B cell (primary cell): ENCODE measurements at regions of chr10 and their contacts with region 1.

Region 1: GRCh38 chr10:119494236-119495060 is 48.1 kb downstream of the RGS10 start:
- DNase-seq: no peak
- ATAC-seq: no peak
- H3K4me3 ChIP-seq: no peak overlapping the region
- H3K4me3 Mint-ChIP-seq: no peak overlapping the region
- H3K27ac ChIP-seq: no peak overlapping the region
- H3K27ac Mint-ChIP-seq: peak overlapping the region; percentile 53
- H3K4me1 ChIP-seq: peaks cover 3 to 8% of the 10 kb centered on the region in 2 donors
- H3K4me1 Mint-ChIP-seq: peaks cover 13% of the 10 kb centered on the region
- H3K27me3 ChIP-seq: no peaks in the 10 kb centered on the region
- H3K27me3 Mint-ChIP-seq: no peaks in the 10 kb centered on the region
- CTCF ChIP-seq: no peak

Region 2: DNA sequence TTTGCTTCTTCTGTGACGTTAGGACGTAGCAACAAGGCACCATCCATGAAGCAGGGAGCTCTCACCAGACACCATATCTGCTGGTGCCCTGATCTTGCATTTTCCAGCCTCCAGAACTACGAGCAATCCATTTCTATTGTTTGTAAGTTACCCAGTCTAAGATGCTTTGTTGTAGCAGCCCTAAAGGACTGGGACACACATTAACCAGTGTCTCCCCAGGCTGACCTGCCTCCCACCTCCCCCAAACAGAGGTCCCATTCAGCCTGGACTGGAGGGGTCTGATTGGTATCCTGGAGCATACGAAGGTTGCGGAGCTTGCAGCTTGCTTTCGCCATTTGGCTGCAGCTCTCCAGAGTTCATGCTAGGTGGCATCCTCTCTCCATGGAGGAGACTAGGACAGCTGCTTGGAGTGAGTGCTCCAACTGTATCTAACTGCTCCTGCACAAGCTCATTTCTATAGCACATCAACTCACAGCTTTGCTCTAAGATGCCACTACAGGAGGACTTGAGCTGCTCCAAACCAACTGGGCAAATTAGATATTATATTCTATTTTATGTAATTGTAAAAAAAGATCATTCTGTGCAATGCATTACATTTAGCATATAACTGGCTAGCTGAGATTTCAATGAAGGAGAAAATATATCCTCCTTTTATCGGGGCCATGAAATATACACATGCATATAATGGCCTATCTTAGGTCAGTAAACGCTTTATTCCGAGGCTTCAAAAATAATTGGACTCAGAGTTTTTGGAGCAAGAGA is 295.0 kb before region 1 on chr10:
- CTCF ChIA-PET with region 1: interaction called, 70 read pairs
- POLR2A ChIA-PET with region 1: no interaction called
- intact Hi-C with region 1: loop called (anchors 1 kb)
- DNase-seq: peak; percentile 68
- ATAC-seq: peak; percentile 84
- H3K4me3 ChIP-seq: no peak overlapping the region
- H3K4me3 Mint-ChIP-seq: no peak overlapping the region
- H3K27ac ChIP-seq: no peak overlapping the region
- H3K27ac Mint-ChIP-seq: no peak overlapping the region
- H3K4me1 ChIP-seq: peaks cover 0 to 3% of the 10 kb centered on the region in 2 donors
- H3K4me1 Mint-ChIP-seq: peaks cover 4% of the 10 kb centered on the region
- H3K27me3 ChIP-seq: peaks cover 0 to 8% (median 6%) of the 10 kb centered on the region in 4 experiments
- H3K27me3 Mint-ChIP-seq: peaks cover 9% of the 10 kb centered on the region
- CTCF ChIP-seq: peak; percentile 52

Region 3: DNA sequence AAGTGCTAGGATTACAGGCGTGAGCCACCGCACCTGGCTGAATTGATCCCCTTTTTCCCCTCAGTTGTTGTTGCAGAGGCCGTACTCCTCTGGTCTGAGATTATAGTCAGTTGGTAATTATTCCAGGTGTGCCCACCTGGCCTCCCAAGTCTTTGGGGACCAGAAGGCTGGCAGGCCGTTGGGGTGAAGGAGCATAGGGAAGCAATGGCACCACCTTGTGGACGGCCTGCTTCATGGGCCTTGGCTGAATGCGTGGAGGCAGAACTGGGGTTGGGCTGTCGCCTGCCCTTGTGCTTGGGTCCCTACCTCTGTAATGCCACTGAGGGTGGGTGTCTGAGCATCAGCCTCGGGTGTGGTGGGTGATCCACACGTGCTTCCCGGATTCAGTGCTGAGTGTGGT is 77.6 kb before region 1 on chr10:
- CTCF ChIA-PET with region 1: interaction called, 14 read pairs
- POLR2A ChIA-PET with region 1: no interaction called
- intact Hi-C with region 1: no loop called
- DNase-seq: peak; percentile 83
- ATAC-seq: peak; percentile 90
- H3K4me3 ChIP-seq: no peak overlapping the region
- H3K4me3 Mint-ChIP-seq: no peak overlapping the region
- H3K27ac ChIP-seq: no peak overlapping the region
- H3K27ac Mint-ChIP-seq: peak overlapping the region; percentile 62
- H3K4me1 ChIP-seq: peaks cover 0 to 8% of the 10 kb centered on the region in 2 donors
- H3K4me1 Mint-ChIP-seq: peaks cover 6% of the 10 kb centered on the region
- H3K27me3 ChIP-seq: no peaks in the 10 kb centered on the region
- H3K27me3 Mint-ChIP-seq: no peaks in the 10 kb centered on the region
- CTCF ChIP-seq: peak; percentile 88

Region 4: DNA sequence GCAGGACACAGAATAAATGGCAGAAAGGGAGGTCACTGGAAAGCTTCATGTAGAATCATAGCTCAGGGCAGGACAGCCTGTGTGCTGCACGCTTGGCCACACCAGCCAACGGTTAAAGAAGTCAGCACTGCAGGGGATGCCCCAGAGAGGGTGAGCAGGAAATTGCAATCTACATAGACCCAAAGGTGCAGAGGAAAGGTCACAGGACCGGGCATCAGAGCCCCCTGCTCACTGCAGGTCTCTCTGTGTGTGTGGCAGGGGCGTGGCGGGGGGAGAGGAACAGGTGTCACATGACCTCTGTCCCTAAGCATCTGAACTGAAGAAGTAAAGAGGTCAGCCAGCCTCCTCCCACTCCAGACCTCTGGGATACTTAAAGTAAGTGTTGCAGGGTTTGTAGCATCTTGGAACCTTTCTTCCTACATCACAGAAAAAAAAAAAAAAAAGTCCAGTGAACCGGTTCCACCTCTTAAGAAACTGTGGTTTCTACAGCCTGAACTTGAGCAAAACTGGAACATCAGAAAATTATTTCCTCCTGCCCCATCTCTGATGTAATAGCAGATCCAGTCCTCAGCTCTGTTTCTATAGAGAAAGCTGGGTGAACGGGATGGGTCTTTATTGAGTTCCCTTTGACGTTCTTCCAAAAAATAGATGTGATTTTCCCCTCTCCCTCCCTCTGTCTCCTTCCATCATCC is 16.2 kb before region 1 on chr10:
- CTCF ChIA-PET with region 1: interaction called, 27 read pairs
- POLR2A ChIA-PET with region 1: interaction called, 9 read pairs
- intact Hi-C with region 1: loop called (anchors 1 kb)
- DNase-seq: peak; percentile 77
- ATAC-seq: peak; percentile 95
- H3K4me3 ChIP-seq: peak overlapping the region in 2 of 5 experiments; percentile 5 to 42
- H3K4me3 Mint-ChIP-seq: peak overlapping the region; percentile 87
- H3K27ac ChIP-seq: peak overlapping the region; percentile 47 to 62
- H3K27ac Mint-ChIP-seq: peak overlapping the region; percentile 81
- H3K4me1 ChIP-seq: peaks cover 27 to 31% of the 10 kb centered on the region in 2 donors
- H3K4me1 Mint-ChIP-seq: peaks cover 37% of the 10 kb centered on the region
- H3K27me3 ChIP-seq: no peaks in the 10 kb centered on the region
- H3K27me3 Mint-ChIP-seq: no peaks in the 10 kb centered on the region
- CTCF ChIP-seq: no peak

Region 5: GRCh38 chr10:119517235-119518141 is 23.0 kb after region 1 on chr10:
- CTCF ChIA-PET with region 1: interaction called, 6 read pairs
- POLR2A ChIA-PET with region 1: interaction called, 12 read pairs
- intact Hi-C with region 1: loop called (anchors 2 kb)
- DNase-seq: peak; percentile 89
- ATAC-seq: peak; percentile 73
- H3K4me3 ChIP-seq: peak overlapping the region in 3 of 5 experiments; percentile 25 to 51 (median 33)
- H3K4me3 Mint-ChIP-seq: peak overlapping the region; percentile 64
- H3K27ac ChIP-seq: peak overlapping the region; percentile 67 to 95
- H3K27ac Mint-ChIP-seq: peak overlapping the region; percentile 94
- H3K4me1 ChIP-seq: peaks cover 31 to 38% of the 10 kb centered on the region in 2 donors
- H3K4me1 Mint-ChIP-seq: peaks cover 34% of the 10 kb centered on the region
- H3K27me3 ChIP-seq: no peaks in the 10 kb centered on the region
- H3K27me3 Mint-ChIP-seq: no peaks in the 10 kb centered on the region
- CTCF ChIP-seq: no peak

Region 6: DNA sequence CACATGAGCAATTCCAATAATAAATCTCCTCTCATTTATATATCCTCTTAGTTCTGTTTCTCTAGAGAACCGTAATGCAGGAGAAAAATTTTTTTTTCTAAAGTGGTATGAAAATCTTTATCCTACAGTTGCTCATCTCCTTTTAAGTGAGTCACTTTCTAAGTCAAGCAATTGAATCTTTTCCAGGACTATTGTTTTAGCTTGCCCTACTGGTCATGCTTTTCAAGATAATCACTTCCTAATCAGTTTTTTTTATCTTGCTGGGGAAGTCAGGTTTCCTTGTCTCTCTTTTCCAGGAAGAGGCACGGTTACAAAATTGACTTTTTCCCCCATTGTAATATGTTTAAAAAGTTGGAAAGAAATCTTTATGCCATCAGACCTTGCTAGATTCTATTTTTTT is 275.4 kb after region 1 on chr10:
- CTCF ChIA-PET with region 1: no interaction called
- POLR2A ChIA-PET with region 1: no interaction called
- intact Hi-C with region 1: no loop called
- DNase-seq: no peak
- ATAC-seq: no peak
- H3K4me3 ChIP-seq: no peak overlapping the region
- H3K4me3 Mint-ChIP-seq: no peak overlapping the region
- H3K27ac ChIP-seq: peak overlapping the region in 1 of 2 donors; percentile 14
- H3K27ac Mint-ChIP-seq: no peak overlapping the region
- H3K4me1 ChIP-seq: peaks cover 0 to 6% of the 10 kb centered on the region in 2 donors
- H3K4me1 Mint-ChIP-seq: peaks cover 32% of the 10 kb centered on the region
- H3K27me3 ChIP-seq: no peaks in the 10 kb centered on the region
- H3K27me3 Mint-ChIP-seq: no peaks in the 10 kb centered on the region
- CTCF ChIP-seq: no peak